MCF 10A (cell line): ENCODE measurements at regions of chr12 and their contacts with region 1.

Region 1: GRCh38 chr12:12334367-12335040 is 15.5 kb downstream of the MANSC1 start:
- DNase-seq: peak; percentile 68
- H3K4me3 Mint-ChIP-seq: no peak overlapping the region
- H3K27ac Mint-ChIP-seq: peak overlapping the region; percentile 84
- H3K4me1 Mint-ChIP-seq: peaks cover 35% of the 10 kb centered on the region
- H3K27me3 Mint-ChIP-seq: no peaks in the 10 kb centered on the region
- CTCF ChIP-seq: peak; percentile 85

Region 2: DNA sequence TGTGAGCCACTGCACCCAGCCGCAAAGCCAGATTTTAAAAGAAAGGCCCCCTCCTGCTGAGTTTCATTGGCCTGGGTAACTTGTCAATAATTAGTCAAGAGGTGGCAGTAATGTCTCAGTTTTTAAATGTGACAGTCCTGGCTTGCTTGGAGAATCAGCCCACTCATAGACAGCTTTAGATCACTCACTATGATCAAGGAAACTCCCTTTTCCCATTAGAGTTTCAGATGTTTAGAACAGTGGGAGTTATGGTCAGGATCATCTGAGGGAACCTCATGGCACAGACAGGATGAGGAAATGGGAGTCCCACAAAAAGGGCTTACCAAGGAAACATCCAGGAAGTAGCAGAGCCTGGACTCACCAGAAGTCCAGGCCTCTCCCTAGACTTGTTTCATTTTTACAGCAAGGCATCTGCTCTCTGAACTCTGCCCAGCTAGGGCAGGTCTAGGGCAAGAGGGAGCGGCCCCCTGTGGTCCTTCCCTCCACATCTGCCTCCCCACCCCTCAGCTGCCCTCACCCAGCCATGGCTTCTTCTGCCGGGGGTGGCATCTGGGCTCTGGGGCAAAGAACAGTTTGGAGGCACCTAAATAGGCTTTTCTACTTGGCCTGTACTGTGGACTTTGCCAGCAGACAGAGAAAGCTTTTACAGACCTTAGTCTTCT is 252.5 kb before region 1 on chr12:
- CTCF ChIA-PET with region 1: interaction called, 51 read pairs
- POLR2A ChIA-PET with region 1: interaction called, 3 read pairs
- intact Hi-C with region 1: loop called (anchors 1 kb)
- DNase-seq: peak; percentile 54
- H3K4me3 Mint-ChIP-seq: no peak overlapping the region
- H3K27ac Mint-ChIP-seq: no peak overlapping the region
- H3K4me1 Mint-ChIP-seq: no peaks in the 10 kb centered on the region
- H3K27me3 Mint-ChIP-seq: no peaks in the 10 kb centered on the region
- CTCF ChIP-seq: peak; percentile 29

Region 3: DNA sequence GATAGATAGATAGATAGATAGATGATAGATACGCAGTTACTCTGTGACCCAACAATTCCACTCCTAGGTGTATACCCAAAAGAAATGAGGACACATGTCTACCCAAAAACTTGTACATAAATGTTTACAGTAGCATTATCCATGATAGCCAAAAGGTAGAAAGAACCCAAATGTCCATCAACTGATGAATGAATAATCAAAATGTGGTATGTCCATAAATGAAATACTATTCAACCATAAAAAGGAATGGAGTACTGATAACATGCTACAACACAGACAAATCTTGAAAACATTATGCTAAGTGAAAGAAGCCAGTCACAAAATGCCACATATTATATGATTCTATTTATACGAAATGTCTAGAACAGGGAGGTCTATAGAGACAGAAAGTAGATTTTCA is 31.5 kb before region 1 on chr12:
- CTCF ChIA-PET with region 1: no interaction called
- POLR2A ChIA-PET with region 1: no interaction called
- intact Hi-C with region 1: no loop called
- DNase-seq: no peak
- H3K4me3 Mint-ChIP-seq: no peak overlapping the region
- H3K27ac Mint-ChIP-seq: no peak overlapping the region
- H3K4me1 Mint-ChIP-seq: no peaks in the 10 kb centered on the region
- H3K27me3 Mint-ChIP-seq: no peaks in the 10 kb centered on the region
- CTCF ChIP-seq: no peak

Region 4: GRCh38 chr12:12319451-12320183 is 14.9 kb before region 1 on chr12:
- CTCF ChIA-PET with region 1: interaction called, 11 read pairs
- POLR2A ChIA-PET with region 1: no interaction called
- intact Hi-C with region 1: no loop called
- DNase-seq: no peak
- H3K4me3 Mint-ChIP-seq: no peak overlapping the region
- H3K27ac Mint-ChIP-seq: no peak overlapping the region
- H3K4me1 Mint-ChIP-seq: no peaks in the 10 kb centered on the region
- H3K27me3 Mint-ChIP-seq: no peaks in the 10 kb centered on the region
- CTCF ChIP-seq: no peak

Region 5: GRCh38 chr12:12356886-12357718 is 22.6 kb after region 1 on chr12 and contains the start of gene BORCS5:
- CTCF ChIA-PET with region 1: interaction called, 15 read pairs
- POLR2A ChIA-PET with region 1: interaction called, 18 read pairs
- intact Hi-C with region 1: no loop called
- DNase-seq: peak; percentile 98
- H3K4me3 Mint-ChIP-seq: peak within 1 kb of the TSS; percentile 91
- H3K27ac Mint-ChIP-seq: peak within 1 kb of the TSS; percentile 94
- H3K4me1 Mint-ChIP-seq: no peaks in the 10 kb centered on the region
- H3K27me3 Mint-ChIP-seq: no peaks in the 10 kb centered on the region
- CTCF ChIP-seq: no peak
- total RNA-seq, gene BORCS5: 11.0 and 15.3 TPM in 2 replicates

Region 6: GRCh38 chr12:12592930-12593329 is 258.4 kb after region 1 on chr12:
- CTCF ChIA-PET with region 1: no interaction called
- POLR2A ChIA-PET with region 1: no interaction called
- intact Hi-C with region 1: no loop called
- DNase-seq: no peak
- H3K4me3 Mint-ChIP-seq: no peak overlapping the region
- H3K27ac Mint-ChIP-seq: no peak overlapping the region
- H3K4me1 Mint-ChIP-seq: peaks cover 6% of the 10 kb centered on the region
- H3K27me3 Mint-ChIP-seq: peaks cover 14% of the 10 kb centered on the region
- CTCF ChIP-seq: no peak